ENCODE measurements at regions of chr6 and their contacts with region 1.

Region 1: GRCh38 chr6:49531774-49532569 is 18.5 kb upstream of the C6orf141 start:
- DNase-seq: peak; percentile 12
- H3K4me3 ChIP-seq: no peak overlapping the region
- H3K27me3 ChIP-seq: no peaks in the 10 kb centered on the region; the same call in 1 of the 2 replicates
- CTCF ChIP-seq: peak; percentile 74

Region 2: GRCh38 chr6:49462927-49463611 is 68.9 kb before region 1 on chr6 and contains the starts of genes CENPQ and MMUT:
- CTCF ChIA-PET with region 1: no interaction called
- POLR2A ChIA-PET with region 1: no interaction called
- DNase-seq: peak; percentile 71
- H3K4me3 ChIP-seq: peak within 1 kb of the TSS; percentile 55
- H3K27me3 ChIP-seq: no peaks in the 10 kb centered on the region
- CTCF ChIP-seq: no peak
- polyA plus RNA-seq, gene CENPQ: 2.1 and 4.7 TPM in 2 replicates
- polyA plus RNA-seq, gene MMUT: 10.2 and 18.7 TPM in 2 replicates

Region 3: GRCh38 chr6:49570474-49571079 is 38.6 kb after region 1 on chr6:
- CTCF ChIA-PET with region 1: interaction called, 11 read pairs
- POLR2A ChIA-PET with region 1: no interaction called
- DNase-seq: no peak
- H3K4me3 ChIP-seq: no peak overlapping the region
- H3K27me3 ChIP-seq: no peaks in the 10 kb centered on the region
- CTCF ChIP-seq: peak; percentile 24; the same call in 1 of the 2 replicates

Region 4: GRCh38 chr6:49606696-49607390 is 74.9 kb after region 1 on chr6:
- CTCF ChIA-PET with region 1: interaction called, 107 read pairs
- POLR2A ChIA-PET with region 1: interaction called, 5 read pairs
- DNase-seq: peak; percentile 8
- H3K4me3 ChIP-seq: no peak overlapping the region
- H3K27me3 ChIP-seq: 0 out of 2 replicates have a peak, but pooled peaks cover 2% of the 10 kb centered on the region
- CTCF ChIP-seq: peak; percentile 83

Region 5: DNA sequence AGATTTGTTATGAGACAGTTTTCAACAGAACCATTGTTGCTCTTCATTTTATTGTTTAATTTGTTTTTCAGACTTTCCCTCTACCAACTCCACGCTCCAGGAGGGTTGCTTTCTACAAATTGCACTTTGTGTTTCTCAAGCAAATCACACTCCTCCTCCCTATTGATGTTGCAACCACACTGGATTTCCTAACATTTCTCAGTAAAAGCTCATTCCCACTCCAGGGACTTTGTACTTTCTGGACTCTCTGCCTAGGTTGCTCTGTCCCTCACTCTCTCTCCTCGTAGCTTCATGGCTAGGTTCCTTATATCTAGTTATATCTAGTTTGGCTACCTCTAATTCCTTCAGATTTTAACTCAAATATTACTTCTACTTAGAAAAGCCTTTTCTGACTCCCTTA is 234.8 kb after region 1 on chr6:
- CTCF ChIA-PET with region 1: no interaction called
- POLR2A ChIA-PET with region 1: no interaction called
- DNase-seq: no peak
- H3K4me3 ChIP-seq: no peak overlapping the region
- H3K27me3 ChIP-seq: no peaks in the 10 kb centered on the region
- CTCF ChIP-seq: no peak

Region 6: GRCh38 chr6:50143011-50143719 is 611.2 kb after region 1 on chr6:
- CTCF ChIA-PET with region 1: no interaction called
- POLR2A ChIA-PET with region 1: no interaction called
- DNase-seq: no peak
- H3K4me3 ChIP-seq: no peak overlapping the region
- H3K27me3 ChIP-seq: no peaks in the 10 kb centered on the region
- CTCF ChIP-seq: no peak

Measured in BJ (cell line).